Activated naive CD4-positive, alpha-beta T cell treated with anti-CD3 and anti-CD28 coated beads for 36 hours (primary cell): ENCODE measurements at regions of chr17 and their contacts with region 1.

Region 1: GRCh38 chr17:27332485-27333409 is 38.8 kb downstream of the WSB1 start:
- DNase-seq: peak; percentile 97
- H3K4me3 Mint-ChIP-seq: peak overlapping the region; percentile 75
- H3K27ac Mint-ChIP-seq: peak overlapping the region; percentile 74
- H3K4me1 Mint-ChIP-seq: peaks cover 20% of the 10 kb centered on the region
- H3K27me3 Mint-ChIP-seq: peaks cover 3% of the 10 kb centered on the region

Region 2: GRCh38 chr17:27206447-27206846 is 126.3 kb before region 1 on chr17:
- CTCF ChIA-PET with region 1: interaction called, 3 read pairs
- intact Hi-C with region 1: loop called (anchors 1 kb)
- DNase-seq: peak; percentile 30
- H3K4me3 Mint-ChIP-seq: no peak overlapping the region
- H3K27ac Mint-ChIP-seq: no peak overlapping the region
- H3K4me1 Mint-ChIP-seq: peaks cover 5% of the 10 kb centered on the region
- H3K27me3 Mint-ChIP-seq: peaks cover 4% of the 10 kb centered on the region

Region 3: GRCh38 chr17:27293898-27294688 is 38.7 kb before region 1 on chr17 and contains the start of gene WSB1:
- CTCF ChIA-PET with region 1: interaction called, 6 read pairs
- intact Hi-C with region 1: loop called (anchors 1 kb)
- DNase-seq: peak; percentile 91
- H3K4me3 Mint-ChIP-seq: peak within 1 kb of the TSS; percentile 96
- H3K27ac Mint-ChIP-seq: peak within 1 kb of the TSS; percentile 99
- H3K4me1 Mint-ChIP-seq: peaks cover 36% of the 10 kb centered on the region
- H3K27me3 Mint-ChIP-seq: no peaks in the 10 kb centered on the region
- total RNA-seq, gene WSB1: 112 to 118 TPM

Region 4: DNA sequence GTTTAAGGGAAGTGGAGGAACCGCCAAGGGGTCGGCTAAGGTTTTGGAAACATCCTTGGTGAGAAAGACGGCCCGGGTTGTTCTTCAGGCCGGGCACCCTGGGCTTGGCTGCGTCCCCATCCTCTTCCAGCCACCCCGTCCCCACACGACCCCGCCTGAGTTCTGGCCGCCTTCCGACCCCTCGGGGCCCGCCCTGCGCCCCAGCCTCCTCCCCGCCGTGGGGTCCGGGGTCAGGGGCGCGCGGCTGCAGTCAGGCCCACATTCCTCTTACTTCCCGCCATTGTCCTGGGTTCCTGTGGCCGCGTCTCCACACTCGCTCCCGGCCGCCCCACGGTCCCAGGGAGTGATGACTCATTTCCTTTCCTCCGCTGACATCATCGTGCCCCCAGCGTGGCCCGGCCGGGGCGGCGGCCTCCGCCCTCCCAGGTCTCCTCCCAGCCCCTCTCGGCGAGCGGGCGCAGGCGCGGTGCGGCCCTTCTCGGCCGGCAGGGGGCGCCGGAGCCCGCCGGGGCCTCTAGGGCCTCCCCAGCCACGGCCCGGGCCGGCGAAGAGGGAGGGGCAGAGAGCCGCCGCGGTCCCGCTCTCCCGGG is 20.8 kb after region 1 on chr17:
- CTCF ChIA-PET with region 1: interaction called, 9 read pairs
- intact Hi-C with region 1: loop called (anchors 2 kb)
- DNase-seq: peak; percentile 86
- H3K4me3 Mint-ChIP-seq: peak overlapping the region; percentile 89
- H3K27ac Mint-ChIP-seq: peak overlapping the region; percentile 93
- H3K4me1 Mint-ChIP-seq: peaks cover 23% of the 10 kb centered on the region
- H3K27me3 Mint-ChIP-seq: no peaks in the 10 kb centered on the region

Region 5: DNA sequence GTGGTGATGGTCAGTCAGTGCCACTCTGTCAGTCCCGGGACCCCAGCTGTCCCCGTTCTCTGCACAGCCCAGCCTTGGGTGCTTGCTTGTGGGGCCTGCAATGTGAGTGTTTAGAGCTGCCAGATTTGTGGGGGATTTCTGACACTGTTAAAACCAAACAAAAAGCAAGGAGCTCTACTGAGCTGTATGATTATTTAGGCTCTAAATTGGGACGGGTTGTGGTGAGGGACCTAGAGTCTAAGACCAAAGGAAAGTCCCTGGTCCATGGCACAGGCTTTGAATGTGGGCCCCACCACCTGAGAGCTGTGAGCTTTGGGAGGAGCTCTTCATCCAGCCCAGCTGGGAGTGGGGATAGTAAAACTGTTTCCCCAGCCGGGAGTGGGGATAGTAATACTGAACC is 186.8 kb after region 1 on chr17:
- CTCF ChIA-PET with region 1: no interaction called
- intact Hi-C with region 1: no loop called
- DNase-seq: no peak
- H3K4me3 Mint-ChIP-seq: no peak overlapping the region
- H3K27ac Mint-ChIP-seq: no peak overlapping the region
- H3K4me1 Mint-ChIP-seq: peaks cover 50% of the 10 kb centered on the region
- H3K27me3 Mint-ChIP-seq: no peaks in the 10 kb centered on the region